ENCODE measurements at regions of chr2 and their contacts with region 1.

Region 1: GRCh38 chr2:99337113-99338028 is at the start of gene EIF5B:
- DNase-seq: peak; percentile 92
- ATAC-seq: peak; percentile 69
- H3K4me3 Mint-ChIP-seq: no peak within 1 kb of the TSS
- H3K27ac Mint-ChIP-seq: no peak within 1 kb of the TSS
- H3K4me1 Mint-ChIP-seq: peaks cover 28% of the 10 kb centered on the region
- H3K27me3 Mint-ChIP-seq: no peaks in the 10 kb centered on the region
- CTCF ChIP-seq: no peak
- total RNA-seq, gene EIF5B: 52.3 and 55.0 TPM in 2 replicates

Region 2: GRCh38 chr2:98608116-98608999 is 729.0 kb before region 1 on chr2 and contains the starts of genes COA5 and UNC50:
- CTCF ChIA-PET with region 1: no interaction called
- POLR2A ChIA-PET with region 1: interaction called, 3 read pairs
- intact Hi-C with region 1: loop called (anchors 2 kb)
- DNase-seq: peak; percentile 88
- ATAC-seq: peak; percentile 91
- H3K4me3 Mint-ChIP-seq: peak within 1 kb of the TSS; percentile 93
- H3K27ac Mint-ChIP-seq: peak within 1 kb of the TSS; percentile 86
- H3K4me1 Mint-ChIP-seq: peaks cover 55% of the 10 kb centered on the region
- H3K27me3 Mint-ChIP-seq: no peaks in the 10 kb centered on the region
- CTCF ChIP-seq: no peak
- total RNA-seq, gene COA5: 31.5 and 37.6 TPM in 2 replicates
- total RNA-seq, gene UNC50: 35.3 and 36.3 TPM in 2 replicates

Region 3: DNA sequence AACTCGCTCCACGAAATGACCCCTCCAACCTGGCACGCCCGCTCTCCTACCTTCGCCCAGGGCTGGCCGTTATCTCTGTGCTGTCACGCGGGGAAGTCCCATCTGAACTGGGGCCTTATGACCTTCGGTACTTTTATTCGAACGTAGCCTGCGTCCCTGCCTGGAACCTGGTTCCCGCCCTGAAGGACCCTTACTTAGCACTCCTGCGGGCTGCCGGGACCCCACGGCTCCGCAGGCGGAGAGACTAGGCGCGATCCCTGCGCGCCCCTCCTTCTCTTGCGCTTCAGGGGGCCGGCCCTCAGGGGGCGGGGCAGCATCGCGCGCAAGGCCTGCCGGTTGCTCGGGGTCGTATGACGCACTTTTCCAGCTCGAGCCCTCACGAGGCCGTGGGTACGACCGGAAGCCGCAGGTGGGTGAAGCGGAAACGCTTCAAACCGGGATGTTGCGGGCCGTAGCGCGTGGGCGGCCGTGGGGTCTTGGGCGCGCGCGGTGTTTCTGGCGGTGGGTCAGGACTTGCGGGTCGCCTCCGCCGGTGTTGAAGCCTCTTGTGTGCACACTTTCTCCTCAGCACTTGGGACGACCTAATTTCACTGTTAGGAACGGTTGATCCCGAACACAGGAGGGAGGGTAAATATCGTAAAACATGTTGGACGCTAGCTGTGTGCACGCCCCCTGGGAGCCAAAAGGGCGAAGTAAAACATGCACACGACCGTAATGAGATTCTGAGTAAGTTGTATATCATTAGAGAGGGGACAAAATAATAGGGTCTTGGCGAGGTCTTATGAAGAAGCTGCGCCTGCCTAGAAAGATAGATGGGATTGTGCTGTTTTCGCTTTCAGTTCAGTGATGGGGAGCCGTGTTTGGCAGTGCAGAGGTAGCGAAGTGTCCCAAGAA is 182.5 kb before region 1 on chr2 and contains the starts of genes LIPT1 and TSGA10:
- CTCF ChIA-PET with region 1: no interaction called
- POLR2A ChIA-PET with region 1: interaction called, 37 read pairs
- intact Hi-C with region 1: loop called (anchors 1 kb)
- DNase-seq: peak; percentile 92
- ATAC-seq: peak; percentile 91
- H3K4me3 Mint-ChIP-seq: peak within 1 kb of the TSS; percentile 90
- H3K27ac Mint-ChIP-seq: peak within 1 kb of the TSS; percentile 92
- H3K4me1 Mint-ChIP-seq: peaks cover 55% of the 10 kb centered on the region
- H3K27me3 Mint-ChIP-seq: no peaks in the 10 kb centered on the region
- CTCF ChIP-seq: no peak
- total RNA-seq, gene LIPT1: 15.1 and 18.1 TPM in 2 replicates
- total RNA-seq, gene TSGA10: 18.5 and 20.4 TPM in 2 replicates

Region 4: DNA sequence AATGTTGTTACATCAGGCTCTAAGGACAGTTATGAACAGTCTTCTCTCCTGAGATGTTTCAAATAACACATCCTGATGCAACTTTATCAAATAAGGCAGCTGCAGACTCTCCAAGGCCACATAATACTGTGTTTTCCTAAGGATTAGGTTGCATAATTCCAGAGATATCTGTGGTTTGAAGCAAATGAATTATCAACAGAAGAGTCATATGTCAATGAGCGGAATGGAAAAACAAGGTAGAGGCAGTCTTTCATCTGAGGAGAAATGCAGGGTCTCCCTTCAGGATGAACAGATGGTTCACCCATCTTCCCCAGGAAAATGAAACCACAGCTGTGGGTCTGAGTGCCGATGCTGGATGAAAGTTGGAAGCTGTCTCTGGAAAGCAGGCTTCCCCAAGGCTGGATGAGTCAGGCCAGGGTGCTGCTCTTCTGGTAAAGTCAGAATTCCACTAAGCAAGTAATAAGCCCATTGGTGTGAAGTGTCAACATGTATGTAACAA is 58.5 kb before region 1 on chr2:
- CTCF ChIA-PET with region 1: no interaction called
- POLR2A ChIA-PET with region 1: no interaction called
- intact Hi-C with region 1: no loop called
- DNase-seq: no peak
- ATAC-seq: no peak
- H3K4me3 Mint-ChIP-seq: no peak overlapping the region
- H3K27ac Mint-ChIP-seq: no peak overlapping the region
- H3K4me1 Mint-ChIP-seq: peaks cover 2% of the 10 kb centered on the region
- H3K27me3 Mint-ChIP-seq: no peaks in the 10 kb centered on the region
- CTCF ChIP-seq: no peak

Region 5: DNA sequence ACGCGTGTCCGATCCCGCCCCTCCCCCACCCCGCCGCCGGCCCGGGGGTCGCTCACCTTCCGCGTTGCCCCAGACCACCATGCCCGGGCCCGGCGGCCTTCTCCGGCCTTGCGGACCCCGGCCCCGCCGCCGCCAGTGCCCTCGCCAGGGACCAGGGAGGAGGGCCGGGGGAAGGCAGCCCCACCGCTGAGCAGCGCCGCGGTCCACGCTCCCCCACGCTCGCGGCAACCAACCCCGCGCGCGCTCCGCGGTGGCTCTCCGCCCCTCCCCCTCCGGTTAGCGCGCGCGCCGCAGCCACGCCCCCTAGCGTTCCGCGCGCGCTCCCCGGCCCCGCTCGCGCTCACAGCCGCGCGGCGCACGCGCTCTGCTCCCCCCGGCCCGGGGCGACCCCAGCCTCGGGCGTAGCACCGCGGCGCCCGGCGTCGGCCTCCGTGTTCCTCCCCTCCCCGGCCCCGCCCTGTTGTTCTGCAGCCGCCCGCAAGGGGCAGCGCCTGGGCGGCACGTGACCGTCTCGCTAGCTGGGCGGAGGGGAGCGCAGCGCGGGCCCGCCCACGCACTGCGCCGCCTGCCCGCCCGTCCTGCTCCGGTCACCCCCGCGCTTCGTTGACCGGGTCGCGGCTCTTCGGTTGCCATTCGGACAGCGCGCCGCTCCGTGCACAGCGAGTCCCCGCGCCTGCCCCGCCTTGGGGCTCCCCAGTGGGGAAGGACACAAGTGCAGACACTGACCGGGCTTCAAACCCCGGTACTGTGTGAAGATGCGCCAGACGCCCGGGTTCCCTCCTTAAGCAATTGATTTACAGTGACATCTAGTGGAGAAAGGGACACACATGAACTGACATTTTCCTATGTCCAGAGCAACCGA is 152.6 kb after region 1 on chr2 and contains the start of gene REV1:
- CTCF ChIA-PET with region 1: interaction called, 18 read pairs
- POLR2A ChIA-PET with region 1: interaction called, 8 read pairs
- intact Hi-C with region 1: loop called (anchors 1 kb)
- DNase-seq: peak; percentile 96
- ATAC-seq: peak; percentile 87
- H3K4me3 Mint-ChIP-seq: peak within 1 kb of the TSS; percentile 96
- H3K27ac Mint-ChIP-seq: peak within 1 kb of the TSS; percentile 93
- H3K4me1 Mint-ChIP-seq: peaks cover 35% of the 10 kb centered on the region
- H3K27me3 Mint-ChIP-seq: no peaks in the 10 kb centered on the region
- CTCF ChIP-seq: no peak
- total RNA-seq, gene REV1: 44.5 and 52.1 TPM in 2 replicates

Region 6: DNA sequence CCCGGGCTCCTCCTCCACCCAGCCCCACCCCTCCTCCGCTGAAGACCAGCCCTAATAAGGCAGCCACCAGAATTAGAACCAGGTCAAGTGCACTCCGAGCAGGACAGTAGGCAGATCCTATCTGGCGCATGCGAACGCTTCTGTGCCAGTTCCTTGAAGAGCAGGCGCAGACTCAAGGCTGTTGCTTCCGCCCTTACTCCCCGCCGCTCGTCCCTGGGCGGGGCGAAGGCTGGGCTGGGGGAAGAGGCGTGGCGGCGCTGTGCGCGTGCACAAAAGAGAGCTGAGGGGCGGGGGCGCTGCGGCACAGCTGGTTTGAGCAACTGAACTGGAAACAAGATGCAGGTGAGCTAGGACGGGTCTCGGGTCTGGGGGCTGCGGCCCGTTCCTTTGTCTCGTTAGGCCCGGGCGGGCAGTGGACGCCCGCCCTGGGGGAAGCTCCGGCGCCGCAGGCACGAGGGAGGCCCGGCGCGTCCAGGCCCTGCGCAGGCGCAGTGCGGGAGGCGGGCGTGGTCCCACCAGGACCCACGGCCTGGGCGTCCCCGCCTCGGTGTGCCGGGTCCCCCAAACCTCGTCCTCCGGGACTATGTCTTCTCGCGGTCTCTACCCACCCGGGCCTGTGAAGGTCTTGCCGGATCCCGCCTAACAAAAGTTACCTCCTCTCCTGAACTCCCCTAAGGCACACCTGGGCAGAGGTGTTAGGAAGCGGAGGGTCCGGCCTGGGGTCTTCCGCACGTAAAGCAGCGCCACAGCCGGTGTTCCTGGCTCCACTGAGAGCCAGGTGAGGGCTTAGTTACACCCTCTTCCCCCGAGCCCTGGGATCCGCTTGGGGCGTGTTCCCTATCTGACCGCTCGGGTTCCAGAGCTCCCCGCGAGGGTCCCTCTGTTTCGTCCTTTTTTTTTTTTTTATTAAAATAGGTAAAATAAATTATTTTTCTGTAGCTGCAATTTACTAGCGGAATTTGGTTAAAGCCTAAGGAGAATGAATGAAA is 1225.7 kb after region 1 on chr2 and contains the start of gene PDCL3:
- CTCF ChIA-PET with region 1: no interaction called
- POLR2A ChIA-PET with region 1: interaction called, 6 read pairs
- intact Hi-C with region 1: loop called (anchors 1 kb)
- DNase-seq: peak; percentile 98
- ATAC-seq: peak; percentile 89
- H3K4me3 Mint-ChIP-seq: peak within 1 kb of the TSS; percentile 90
- H3K27ac Mint-ChIP-seq: peak within 1 kb of the TSS; percentile 98
- H3K4me1 Mint-ChIP-seq: peaks cover 21% of the 10 kb centered on the region
- H3K27me3 Mint-ChIP-seq: no peaks in the 10 kb centered on the region
- CTCF ChIP-seq: no peak
- total RNA-seq, gene PDCL3: 26.1 and 27.8 TPM in 2 replicates